ENCODE measurements at regions of chr5 and their contacts with region 1.

Region 1: DNA sequence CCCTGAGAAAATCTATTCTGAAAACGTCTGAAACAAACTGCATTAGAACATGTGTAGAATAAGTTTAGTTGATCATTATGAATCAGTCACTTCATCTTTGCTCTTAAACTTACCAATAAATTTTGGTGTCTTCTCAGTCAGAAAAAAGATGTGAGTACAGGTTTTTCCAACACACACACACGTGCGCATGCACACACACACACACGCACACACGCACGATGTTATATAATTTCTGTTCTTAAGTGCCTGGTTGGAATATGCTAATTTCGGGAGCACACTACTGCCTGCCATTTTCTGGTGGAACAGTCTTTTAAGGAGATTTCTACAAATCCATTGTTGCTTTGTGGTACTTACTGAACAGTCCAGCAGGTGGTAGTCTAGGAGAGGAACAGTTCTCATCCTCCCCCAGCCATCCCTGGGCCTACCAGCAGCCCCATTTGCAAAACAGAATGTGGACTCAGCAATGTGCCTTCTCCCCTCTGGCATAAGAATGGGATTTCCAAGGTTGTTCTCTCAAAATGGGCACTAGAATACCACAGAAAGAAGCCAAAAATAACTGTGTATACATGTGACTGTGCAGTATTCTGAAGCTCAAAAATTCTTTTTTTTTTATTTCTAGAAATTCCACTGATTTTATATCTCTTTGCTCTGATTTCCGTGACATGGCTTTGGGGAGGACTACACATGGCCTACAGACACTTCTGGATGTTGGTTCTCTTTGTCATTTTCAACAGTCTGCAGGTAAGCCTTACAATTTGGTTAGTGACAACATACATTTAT is 281.3 kb downstream of the ARRDC3 start:
- DNase-seq: peak; percentile 60 to 73
- ATAC-seq: peak; percentile 90 to 99 (median 97)
- H3K4me3 ChIP-seq: no peak overlapping the region
- H3K27ac ChIP-seq: no peak overlapping the region
- H3K4me1 ChIP-seq: peaks cover 3% of the 10 kb centered on the region
- H3K27me3 ChIP-seq: no peaks in the 10 kb centered on the region
- CTCF ChIP-seq: peak; percentile 77

Region 2: GRCh38 chr5:91132550-91132949 is 30.8 kb after region 1 on chr5:
- intact Hi-C with region 1: no loop called
- DNase-seq: no peak
- ATAC-seq: no peak
- H3K4me3 ChIP-seq: no peak overlapping the region
- H3K27ac ChIP-seq: no peak overlapping the region
- H3K4me1 ChIP-seq: no peaks in the 10 kb centered on the region
- H3K27me3 ChIP-seq: no peaks in the 10 kb centered on the region
- CTCF ChIP-seq: no peak

Region 3: DNA sequence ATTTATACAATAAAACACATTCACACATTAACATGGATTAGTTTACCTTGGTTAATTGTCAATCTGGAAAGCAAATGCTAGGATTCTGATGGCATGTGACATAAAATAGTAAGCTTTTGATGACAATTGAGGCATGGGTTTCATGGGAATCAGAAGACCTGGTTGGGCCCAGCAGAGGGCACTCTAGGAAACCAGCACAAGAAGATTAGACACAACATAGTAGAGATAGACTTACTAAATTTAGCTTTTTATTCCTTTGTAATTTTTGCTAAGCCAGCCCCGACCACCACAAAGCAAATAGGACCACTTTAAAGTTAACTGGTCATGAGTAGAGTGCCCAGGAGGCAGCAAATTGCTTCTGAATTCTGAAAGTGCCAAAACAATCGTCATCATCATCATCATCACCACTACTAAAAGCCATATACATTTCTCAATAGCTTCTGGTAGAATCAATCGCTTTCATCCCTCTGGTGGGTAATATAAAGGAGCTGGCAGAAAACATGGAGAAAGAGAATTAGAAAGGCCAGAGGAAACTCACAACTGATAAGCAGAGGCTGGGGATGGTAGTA is 118.1 kb after region 1 on chr5:
- intact Hi-C with region 1: loop called (anchors 5 to 10 kb)
- DNase-seq: no peak
- ATAC-seq: peak in 3 of 4 donors; percentile 51 to 68 (median 68)
- H3K4me3 ChIP-seq: no peak overlapping the region
- H3K27ac ChIP-seq: peak overlapping the region; percentile 31
- H3K4me1 ChIP-seq: no peaks in the 10 kb centered on the region
- H3K27me3 ChIP-seq: no peaks in the 10 kb centered on the region
- CTCF ChIP-seq: peak; percentile 30

Measured in psoas muscle (tissue), 8 donors.